Mucosa of descending colon (tissue), 3 donors: ENCODE measurements at regions of chr2 and their contacts with region 1.

Region 1: GRCh38 chr2:134457765-134458472 is 204.0 kb downstream of the MGAT5 start:
- DNase-seq: no peak
- ATAC-seq: no peak
- H3K4me3 ChIP-seq: no peak overlapping the region
- H3K4me1 ChIP-seq: no peaks in the 10 kb centered on the region
- CTCF ChIP-seq: no peak

Region 2: DNA sequence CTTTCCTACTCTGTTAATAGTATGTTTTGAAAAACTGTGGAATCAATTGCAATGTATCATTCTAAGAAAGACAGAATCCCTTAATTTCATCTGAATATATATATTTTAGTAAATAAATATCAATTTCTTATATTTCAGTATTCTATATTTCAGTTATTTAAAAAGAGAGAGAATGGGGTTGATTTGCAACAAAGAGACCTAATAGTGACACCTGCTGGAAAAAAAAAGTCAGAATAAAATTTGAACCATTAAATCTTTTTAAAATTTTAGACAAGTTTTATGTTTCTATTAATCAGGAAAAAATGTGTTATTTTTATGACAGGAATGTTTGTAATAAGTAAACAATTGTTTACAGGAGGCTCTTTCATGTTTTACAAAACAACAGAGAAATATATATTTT is 440.0 kb after region 1 on chr2:
- intact Hi-C with region 1: loop called in 1 of 2 experiments (anchors 10 kb)
- DNase-seq: no peak
- ATAC-seq: no peak
- H3K4me3 ChIP-seq: no peak overlapping the region
- H3K4me1 ChIP-seq: no peaks in the 10 kb centered on the region
- CTCF ChIP-seq: no peak